ENCODE measurements at regions of chr12 and their contacts with region 1.

Region 1: GRCh38 chr12:14514154-14514842 is 53.4 kb downstream of the PLBD1 start:
- DNase-seq: peak; percentile 89
- H3K4me3 ChIP-seq: no peak overlapping the region
- H3K27ac ChIP-seq: no peak overlapping the region
- H3K4me1 ChIP-seq: peaks cover 13% of the 10 kb centered on the region
- H3K27me3 ChIP-seq: no peaks in the 10 kb centered on the region
- CTCF ChIP-seq: peak; percentile 78

Region 2: DNA sequence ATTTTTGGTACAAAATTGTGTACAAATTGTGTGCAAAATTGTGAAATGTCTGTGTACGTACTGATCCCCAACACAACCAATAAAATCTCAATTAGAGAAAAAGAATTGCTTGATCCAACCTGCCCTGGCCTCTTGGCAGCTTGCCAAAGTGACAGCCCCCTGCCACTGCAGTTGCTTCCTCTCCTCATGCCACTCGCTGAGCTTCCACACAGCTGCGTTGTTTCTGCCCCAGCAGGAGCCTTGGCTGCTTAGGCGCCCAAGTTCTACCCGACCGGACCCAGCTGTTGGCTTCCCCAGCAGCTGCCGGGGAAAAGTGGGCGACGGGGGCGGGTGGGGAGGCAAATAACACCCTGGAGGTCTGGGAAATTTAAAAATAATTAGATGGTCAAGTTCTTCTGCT is 320.7 kb before region 1 on chr12:
- CTCF ChIA-PET with region 1: no interaction called
- POLR2A ChIA-PET with region 1: no interaction called
- intact Hi-C with region 1: loop called (anchors 5 kb)
- DNase-seq: peak; percentile 88
- H3K4me3 ChIP-seq: no peak overlapping the region
- H3K27ac ChIP-seq: no peak overlapping the region
- H3K4me1 ChIP-seq: peaks cover 13% of the 10 kb centered on the region
- H3K27me3 ChIP-seq: no peaks in the 10 kb centered on the region
- CTCF ChIP-seq: no peak

Region 3: DNA sequence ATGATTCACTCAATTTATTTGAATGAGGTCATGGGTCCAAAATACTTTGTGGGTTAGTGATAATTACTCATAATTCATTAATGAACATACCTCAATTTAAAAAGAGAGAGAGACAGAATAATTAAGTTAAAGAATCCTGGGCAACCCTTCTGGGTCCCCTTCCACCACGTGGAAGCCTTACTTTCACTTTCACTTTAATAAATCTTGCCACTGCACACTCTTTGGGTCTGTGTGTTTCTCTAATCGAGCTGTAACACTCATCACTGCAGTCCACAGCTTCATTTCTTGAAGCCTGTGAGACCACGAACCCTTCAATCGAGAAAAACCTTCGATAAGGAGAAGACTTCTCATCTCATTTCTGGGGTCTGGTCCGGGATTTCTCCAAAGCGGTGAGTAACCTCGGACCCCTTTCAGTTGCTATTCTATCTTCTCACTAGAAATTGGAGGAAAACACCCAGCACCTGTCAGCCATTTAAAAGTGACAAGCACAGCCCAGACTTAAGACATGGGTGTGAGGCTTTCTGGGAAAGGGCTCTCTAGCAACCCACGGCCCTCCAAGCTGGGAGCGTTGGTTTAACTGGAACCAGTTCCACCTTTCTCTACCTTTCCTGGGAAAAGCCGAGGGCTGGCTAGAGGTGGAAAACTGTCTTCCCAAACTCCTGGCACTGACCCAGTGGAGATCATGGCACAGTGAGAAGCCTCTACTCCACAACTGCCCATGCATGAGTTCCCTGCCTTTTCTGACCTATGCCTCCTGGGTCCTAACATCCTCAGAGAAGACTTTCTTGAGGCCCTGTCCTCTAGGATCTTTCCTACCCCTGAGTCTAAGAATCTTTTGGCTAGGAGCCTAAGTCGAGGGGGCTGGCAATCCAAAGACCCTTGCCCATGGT is 297.6 kb before region 1 on chr12:
- CTCF ChIA-PET with region 1: interaction called, 11 read pairs
- POLR2A ChIA-PET with region 1: no interaction called
- intact Hi-C with region 1: no loop called
- DNase-seq: peak; percentile 21
- H3K4me3 ChIP-seq: no peak overlapping the region
- H3K27ac ChIP-seq: no peak overlapping the region
- H3K4me1 ChIP-seq: peaks cover 9% of the 10 kb centered on the region
- H3K27me3 ChIP-seq: no peaks in the 10 kb centered on the region
- CTCF ChIP-seq: no peak

Region 4: GRCh38 chr12:14618983-14619382 is 104.7 kb after region 1 on chr12:
- CTCF ChIA-PET with region 1: no interaction called
- POLR2A ChIA-PET with region 1: no interaction called
- intact Hi-C with region 1: loop called (anchors 1 kb)
- DNase-seq: peak; percentile 54
- H3K4me3 ChIP-seq: no peak overlapping the region
- H3K27ac ChIP-seq: no peak overlapping the region
- H3K4me1 ChIP-seq: peaks cover 4% of the 10 kb centered on the region
- H3K27me3 ChIP-seq: no peaks in the 10 kb centered on the region
- CTCF ChIP-seq: peak; percentile 61

Region 5: GRCh38 chr12:14664510-14664909 is 150.2 kb after region 1 on chr12:
- CTCF ChIA-PET with region 1: interaction called, 7 read pairs
- POLR2A ChIA-PET with region 1: no interaction called
- intact Hi-C with region 1: loop called (anchors 1 kb)
- DNase-seq: peak; percentile 65
- H3K4me3 ChIP-seq: no peak overlapping the region
- H3K27ac ChIP-seq: no peak overlapping the region
- H3K4me1 ChIP-seq: no peaks in the 10 kb centered on the region
- H3K27me3 ChIP-seq: no peaks in the 10 kb centered on the region
- CTCF ChIP-seq: peak; percentile 78